ENCODE measurements at regions of chr15 and their contacts with region 1.

Region 1: DNA sequence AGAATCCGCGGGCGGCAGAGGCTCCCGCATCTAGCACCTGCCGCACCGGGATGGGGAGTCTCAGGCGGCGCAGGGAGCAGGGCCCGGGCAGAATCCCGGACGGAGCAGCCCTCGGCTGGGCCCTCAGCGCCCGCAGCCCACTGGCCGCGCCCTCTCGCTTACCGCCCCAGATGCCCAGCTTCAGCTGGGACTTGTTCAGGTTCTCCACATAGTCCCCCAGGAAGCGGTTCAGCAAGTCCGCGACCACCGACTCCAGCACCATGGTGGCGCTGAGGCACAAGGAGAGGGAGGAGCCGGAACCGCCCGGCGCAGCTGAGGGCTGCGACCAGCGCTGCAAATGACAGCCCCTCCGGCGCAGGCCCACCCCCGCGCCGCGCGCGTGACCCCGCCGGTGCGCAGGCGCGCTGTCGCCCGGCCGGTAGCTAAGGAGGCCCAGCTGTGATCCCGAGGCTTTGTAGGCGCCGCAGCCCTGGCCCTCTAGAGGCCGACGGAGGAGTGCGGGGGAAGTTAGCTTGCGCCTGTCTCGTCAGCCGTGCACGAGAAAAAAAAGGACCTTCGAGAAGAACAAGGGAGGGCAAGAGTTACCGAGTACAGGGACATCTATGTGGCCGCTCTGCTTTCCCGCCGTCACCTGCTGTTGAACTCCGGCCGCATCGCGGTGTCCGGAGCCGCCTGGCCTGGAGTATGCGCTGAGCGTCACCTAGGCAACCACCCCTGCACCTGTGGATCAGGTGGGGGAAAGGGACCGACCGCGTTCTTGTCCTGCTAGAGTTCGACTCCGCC is at the start of gene VPS13C:
- DNase-seq: peak; percentile 88
- H3K4me3 ChIP-seq: peak within 1 kb of the TSS; percentile 75 to 99
- H3K27ac ChIP-seq: peak within 1 kb of the TSS; percentile 89 to 95
- H3K4me1 ChIP-seq: no peaks in the 10 kb centered on the region
- H3K27me3 ChIP-seq: no peaks in the 10 kb centered on the region
- CTCF ChIP-seq: peak; percentile 51 to 90 (median 82)
- POLR2A ChIP-seq: peak; percentile 86
- total RNA-seq, gene VPS13C: 53.5 to 60.2 TPM

Region 2: DNA sequence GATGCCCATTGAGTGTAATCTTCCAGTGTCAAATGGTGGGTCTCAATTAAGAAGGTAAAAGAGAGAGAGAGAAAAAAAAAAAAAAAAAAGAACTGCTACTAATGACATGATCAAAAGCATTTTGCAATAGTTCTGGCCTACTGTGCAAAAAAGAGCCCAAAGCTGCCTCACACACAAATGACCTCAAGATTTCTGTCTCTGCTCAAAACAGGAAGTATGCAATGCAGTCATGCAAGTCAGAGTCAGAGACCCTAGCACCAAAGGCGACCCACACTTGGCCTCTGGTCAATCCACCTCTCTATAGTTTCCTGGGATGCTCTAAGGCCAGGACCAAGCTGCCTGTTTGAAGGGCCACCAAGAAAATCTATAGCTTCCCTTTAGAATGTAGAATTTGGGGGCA is 323.5 kb before region 1 on chr15:
- intact Hi-C with region 1: no loop called
- DNase-seq: no peak
- H3K4me3 ChIP-seq: no peak overlapping the region
- H3K27ac ChIP-seq: no peak overlapping the region
- H3K4me1 ChIP-seq: no peaks in the 10 kb centered on the region
- H3K27me3 ChIP-seq: no peaks in the 10 kb centered on the region
- CTCF ChIP-seq: no peak
- POLR2A ChIP-seq: no peak

Region 3: DNA sequence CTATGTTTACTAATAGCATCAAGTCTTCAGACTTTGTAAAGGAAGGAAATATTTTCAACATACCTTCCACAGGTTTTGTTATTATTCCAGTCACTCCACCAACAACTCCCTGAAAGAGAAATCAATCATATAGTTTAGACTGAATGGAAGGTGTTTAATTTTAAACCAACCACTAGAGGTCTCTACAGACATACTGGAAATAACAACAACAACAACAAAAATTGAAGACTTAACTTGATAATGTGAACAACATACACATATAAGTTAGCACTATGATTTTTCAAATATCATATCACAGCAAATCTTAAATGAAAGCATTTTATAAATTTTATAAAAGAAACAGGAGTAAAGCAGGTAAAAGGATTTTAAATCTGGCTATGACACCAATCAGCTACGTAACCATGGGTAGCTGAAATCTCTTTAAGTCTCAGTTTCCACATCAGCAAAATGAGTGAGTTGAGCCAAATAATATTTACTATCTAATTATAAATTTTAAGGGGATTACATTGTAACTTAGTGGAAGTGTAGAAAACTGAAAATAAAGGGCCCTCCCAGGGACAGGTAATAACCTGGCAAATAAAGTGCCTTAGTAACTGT is 188.3 kb before region 1 on chr15:
- intact Hi-C with region 1: loop called (anchors 10 kb)
- DNase-seq: no peak
- H3K4me3 ChIP-seq: no peak overlapping the region
- H3K27ac ChIP-seq: no peak overlapping the region
- H3K4me1 ChIP-seq: no peaks in the 10 kb centered on the region
- H3K27me3 ChIP-seq: no peaks in the 10 kb centered on the region
- CTCF ChIP-seq: peak in 3 of 4 experiments; percentile 34 to 63 (median 53)
- POLR2A ChIP-seq: no peak

Region 4: GRCh38 chr15:62119227-62119864 is 59.0 kb after region 1 on chr15:
- intact Hi-C with region 1: no loop called
- DNase-seq: no peak
- H3K4me3 ChIP-seq: no peak overlapping the region
- H3K27ac ChIP-seq: peak overlapping the region in 1 of 2 donors; percentile 20
- H3K4me1 ChIP-seq: no peaks in the 10 kb centered on the region
- H3K27me3 ChIP-seq: no peaks in the 10 kb centered on the region
- CTCF ChIP-seq: no peak
- POLR2A ChIP-seq: no peak

Region 5: DNA sequence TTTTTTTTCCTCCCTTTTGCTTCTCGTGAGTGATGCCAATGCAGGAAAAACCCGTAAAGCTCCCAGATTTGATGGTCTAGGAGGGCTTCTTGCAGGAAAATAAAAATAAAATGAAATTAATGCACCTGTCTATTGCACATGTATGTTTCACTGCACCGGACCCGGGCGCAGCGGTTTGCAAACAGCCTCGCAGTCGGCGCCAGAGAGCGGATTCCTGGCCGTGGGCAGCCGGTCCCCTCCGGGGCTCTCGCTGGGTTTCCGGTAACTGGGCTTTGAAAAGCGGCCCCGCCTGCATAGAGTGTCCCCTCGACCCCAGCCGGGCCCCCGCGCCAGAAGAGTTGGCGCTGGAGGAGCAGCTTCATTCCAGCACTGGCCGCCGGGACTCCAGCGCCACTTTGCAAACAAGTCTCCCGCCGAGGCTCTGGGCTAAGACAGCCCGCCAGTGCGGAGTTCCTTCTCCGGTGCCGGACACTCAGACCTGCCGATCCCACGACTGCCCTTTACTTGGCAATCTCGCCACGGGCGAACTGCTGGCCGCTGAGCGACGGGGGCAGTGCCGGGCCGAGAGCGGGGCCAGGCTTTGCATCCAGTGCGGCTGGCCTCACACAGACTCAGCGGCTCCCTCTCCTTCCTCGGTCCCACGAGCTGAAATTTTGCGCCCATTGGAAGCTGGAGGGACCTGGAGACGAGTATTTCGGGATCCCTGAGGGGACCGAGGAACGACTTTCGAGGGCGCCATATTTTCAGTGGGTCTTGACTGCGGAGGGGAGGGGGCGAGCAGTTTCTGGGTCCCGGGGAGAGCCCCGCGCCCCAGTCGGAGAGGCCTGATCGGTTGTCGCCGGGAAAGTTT is 330.7 kb after region 1 on chr15:
- intact Hi-C with region 1: no loop called
- DNase-seq: peak; percentile 32
- H3K4me3 ChIP-seq: peak overlapping the region; percentile 85 to 92
- H3K27ac ChIP-seq: peak overlapping the region; percentile 51 to 70
- H3K4me1 ChIP-seq: no peaks in the 10 kb centered on the region
- H3K27me3 ChIP-seq: no peaks in the 10 kb centered on the region
- CTCF ChIP-seq: no peak
- POLR2A ChIP-seq: no peak

Region 6: DNA sequence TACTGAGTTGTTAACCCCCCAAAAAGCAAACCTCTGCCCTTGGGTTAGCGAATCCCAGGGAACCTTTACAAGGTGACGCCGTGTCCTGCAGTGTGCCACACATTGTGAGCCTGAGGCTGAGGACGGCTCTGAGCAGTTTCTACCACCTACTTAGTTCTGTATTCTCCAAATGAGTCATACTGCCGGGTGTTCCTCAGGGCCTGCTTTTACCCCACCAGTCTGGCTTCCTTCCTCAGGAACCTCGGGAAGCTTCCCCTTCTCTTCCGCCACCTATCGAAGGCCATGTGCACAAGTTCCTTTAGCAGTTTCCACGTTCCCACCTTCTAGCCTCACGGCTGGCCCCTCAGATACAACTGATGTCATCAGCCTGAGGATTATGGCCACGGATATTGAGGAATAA is 598.2 kb after region 1 on chr15:
- intact Hi-C with region 1: no loop called
- DNase-seq: no peak
- H3K4me3 ChIP-seq: no peak overlapping the region
- H3K27ac ChIP-seq: no peak overlapping the region
- H3K4me1 ChIP-seq: no peaks in the 10 kb centered on the region
- H3K27me3 ChIP-seq: no peaks in the 10 kb centered on the region
- CTCF ChIP-seq: no peak
- POLR2A ChIP-seq: no peak